Stomach (tissue), 19 donors: ENCODE measurements at regions of chr3 and their contacts with region 1.

Region 1: DNA sequence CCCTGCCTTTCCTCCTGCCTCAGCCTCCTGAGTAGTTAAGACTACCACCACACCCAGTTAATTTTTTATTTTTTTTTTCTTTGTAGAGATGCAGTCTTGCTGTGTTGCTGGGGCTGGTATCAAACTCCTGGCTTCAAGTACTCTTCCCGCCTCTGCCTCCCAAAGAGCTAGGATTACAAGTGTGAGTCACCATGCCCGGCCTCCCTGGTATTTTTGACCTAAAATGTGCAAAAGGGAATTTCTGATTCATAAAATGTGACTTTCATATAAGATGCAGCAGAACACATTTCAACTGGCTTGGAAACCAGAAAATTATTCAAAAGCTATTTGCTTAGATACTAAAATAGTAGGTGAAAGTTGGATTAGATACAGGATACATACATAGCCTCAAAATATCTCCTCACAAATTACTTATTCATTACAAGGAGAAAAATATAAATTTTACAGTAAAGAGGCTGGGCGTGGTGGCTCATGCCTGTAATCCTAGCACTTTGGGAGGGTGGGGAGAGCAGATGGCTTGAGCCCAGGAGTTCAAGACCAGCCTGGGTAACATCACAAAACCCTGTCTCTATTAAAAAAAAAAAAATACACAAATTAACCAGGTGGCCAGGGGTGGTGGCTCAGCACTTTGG is 32.0 kb downstream of the MAP4 start:
- DNase-seq: no peak
- H3K4me3 ChIP-seq: no peak overlapping the region
- H3K27ac ChIP-seq: no peak overlapping the region
- H3K4me1 ChIP-seq: peaks cover 0 to 38% (median 19%) of the 10 kb centered on the region in 4 donors
- H3K27me3 ChIP-seq: no peaks in the 10 kb centered on the region
- CTCF ChIP-seq: no peak
- EP300 ChIP-seq: no peak
- POLR2A ChIP-seq: no peak

Region 2: DNA sequence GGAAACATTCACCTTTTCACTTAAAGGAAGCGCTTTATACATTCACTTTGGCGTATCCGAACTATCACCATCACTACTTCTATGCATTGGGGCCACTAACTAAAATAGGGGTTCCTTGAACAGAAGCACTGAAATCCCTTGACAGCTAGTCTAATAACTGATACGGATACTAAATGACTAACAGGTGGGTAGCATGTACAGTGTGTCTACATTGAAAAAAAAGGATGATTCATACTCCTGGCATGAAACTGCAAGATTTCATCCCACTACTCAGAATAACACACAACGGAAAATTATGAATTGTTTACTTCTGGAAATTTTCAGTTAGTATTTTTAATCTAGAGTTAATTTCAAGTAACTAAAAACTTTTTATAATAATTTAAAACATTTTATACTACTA is 299.2 kb before region 1 on chr3:
- intact Hi-C with region 1: no loop called
- DNase-seq: no peak
- H3K4me3 ChIP-seq: no peak overlapping the region
- H3K27ac ChIP-seq: no peak overlapping the region
- H3K4me1 ChIP-seq: no peaks in the 10 kb centered on the region
- H3K27me3 ChIP-seq: no peaks in the 10 kb centered on the region
- CTCF ChIP-seq: no peak
- EP300 ChIP-seq: no peak
- POLR2A ChIP-seq: no peak

Region 3: DNA sequence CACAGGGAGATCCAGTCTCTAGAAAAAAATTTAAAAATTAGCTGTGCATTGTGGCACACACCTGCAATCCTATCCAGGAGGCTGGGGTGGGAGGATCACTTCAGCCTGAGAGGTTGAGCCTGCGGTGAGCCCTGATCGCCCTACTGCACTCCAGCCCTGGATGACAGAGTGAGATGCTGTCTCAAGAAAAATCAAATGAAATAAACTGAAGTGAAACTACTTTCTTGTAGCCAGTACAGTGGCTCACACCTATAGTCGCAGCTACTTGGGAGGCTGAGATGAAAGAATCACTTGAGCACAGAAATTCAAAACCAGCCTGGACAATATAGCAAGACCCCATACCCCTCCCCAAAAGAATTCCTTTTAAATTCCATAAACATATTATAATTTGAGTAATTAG is 237.9 kb before region 1 on chr3:
- intact Hi-C with region 1: no loop called
- DNase-seq: no peak
- H3K4me3 ChIP-seq: no peak overlapping the region
- H3K27ac ChIP-seq: no peak overlapping the region
- H3K4me1 ChIP-seq: peaks cover 0 to 16% (median 7%) of the 10 kb centered on the region in 4 donors
- H3K27me3 ChIP-seq: no peaks in the 10 kb centered on the region
- CTCF ChIP-seq: no peak
- EP300 ChIP-seq: no peak
- POLR2A ChIP-seq: no peak

Region 4: DNA sequence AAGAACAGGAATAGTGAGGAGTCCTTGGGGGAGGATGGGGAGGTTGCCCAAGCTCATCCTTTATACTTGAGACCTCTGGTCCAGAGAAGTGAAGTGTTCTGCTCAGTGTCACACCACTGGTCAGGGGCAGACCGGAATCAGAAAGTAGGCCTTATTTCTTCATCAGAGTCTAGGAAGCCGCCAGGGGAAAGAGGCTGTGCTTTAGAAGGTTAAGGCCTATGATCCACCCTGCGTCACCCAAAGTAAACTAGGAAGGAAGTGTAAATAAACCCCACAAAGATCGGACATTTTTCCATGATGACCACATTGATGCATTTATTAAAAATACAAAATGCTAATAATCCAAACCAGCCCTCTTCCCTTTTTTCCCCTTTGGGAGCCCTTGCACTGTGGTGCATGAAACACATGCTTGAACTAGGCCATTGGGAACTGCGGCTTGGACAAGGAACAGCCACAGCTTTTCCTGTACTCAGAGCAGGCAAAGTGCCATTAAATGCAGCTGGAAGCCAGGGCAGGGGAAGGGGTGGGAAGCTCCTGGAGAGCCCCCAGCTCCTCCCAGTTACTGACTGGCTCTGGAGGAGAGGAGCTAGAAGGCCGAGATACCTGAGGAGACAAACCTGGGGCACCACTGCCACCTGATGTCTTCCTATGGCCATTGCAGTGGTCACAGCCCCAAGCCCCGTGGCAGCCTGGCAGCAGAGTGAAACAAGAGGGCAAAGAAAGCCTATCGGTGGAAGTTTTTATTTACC is 167.0 kb after region 1 on chr3:
- intact Hi-C with region 1: loop called (anchors 5 kb)
- DNase-seq: peak; percentile 81 to 92
- H3K4me3 ChIP-seq: no peak overlapping the region
- H3K27ac ChIP-seq: peak overlapping the region in 4 of 5 donors; percentile 49 to 69 (median 60)
- H3K4me1 ChIP-seq: peaks cover 0 to 23% (median 15%) of the 10 kb centered on the region in 4 donors
- H3K27me3 ChIP-seq: no peaks in the 10 kb centered on the region
- CTCF ChIP-seq: peak in 5 of 7 experiments; percentile 76 to 90 (median 83)
- EP300 ChIP-seq: no peak
- POLR2A ChIP-seq: no peak